Ovary (tissue), 10 donors: ENCODE measurements at regions of chr1 and their contacts with region 1.

Region 1: DNA sequence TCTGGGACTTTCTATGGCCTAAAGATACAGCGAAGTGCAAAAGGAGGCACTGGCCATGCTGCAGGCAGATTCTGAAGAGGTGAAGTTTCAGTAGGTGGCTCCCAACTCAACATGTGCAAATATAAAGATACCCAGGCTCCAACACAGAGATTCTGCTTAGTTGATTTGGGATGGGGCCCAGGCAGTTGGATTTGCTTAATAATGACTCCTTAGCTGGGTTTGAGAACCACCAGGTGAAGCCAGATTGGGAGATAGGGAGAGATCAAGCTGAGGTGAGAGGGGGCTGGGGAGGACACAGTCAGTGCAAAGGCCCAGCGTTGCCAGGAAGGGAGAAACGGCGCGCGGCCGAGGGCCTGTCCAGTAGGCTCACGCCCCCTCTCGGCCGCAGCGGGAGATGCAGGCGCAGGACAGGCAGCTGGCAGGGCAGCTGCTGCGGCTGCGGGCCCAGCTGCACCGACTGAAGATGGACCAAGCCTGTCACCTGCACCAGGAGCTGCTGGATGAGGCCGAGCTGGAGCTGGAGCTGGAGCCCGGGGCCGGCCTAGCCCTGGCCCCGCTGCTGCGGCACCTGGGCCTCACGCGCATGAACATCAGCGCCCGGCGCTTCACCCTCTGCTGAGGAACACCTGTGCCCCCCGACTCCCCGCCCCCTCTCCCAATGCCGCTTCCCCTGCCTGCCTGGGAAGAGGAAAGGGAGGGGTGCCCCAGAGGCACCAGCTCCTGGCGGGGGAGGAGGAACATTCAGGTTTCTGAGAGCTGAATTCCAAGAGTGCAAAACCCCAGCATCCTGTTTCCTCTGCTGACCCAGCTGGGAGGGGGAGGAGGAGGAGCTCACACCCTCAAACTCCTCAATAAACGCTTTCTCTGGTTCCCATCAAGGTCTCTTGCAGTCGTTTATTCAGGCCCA is 1.2 kb downstream of the FAM167B start:
- DNase-seq: peak; percentile 82 to 88 (median 84)
- H3K4me3 ChIP-seq: no peak overlapping the region
- H3K27ac ChIP-seq: no peak overlapping the region
- H3K4me1 ChIP-seq: peaks cover 12% of the 10 kb centered on the region
- H3K27me3 ChIP-seq: no peaks in the 10 kb centered on the region
- CTCF ChIP-seq: peak; percentile 33 to 81 (median 76)
- EP300 ChIP-seq: no peak
- POLR2A ChIP-seq: no peak

Region 2: DNA sequence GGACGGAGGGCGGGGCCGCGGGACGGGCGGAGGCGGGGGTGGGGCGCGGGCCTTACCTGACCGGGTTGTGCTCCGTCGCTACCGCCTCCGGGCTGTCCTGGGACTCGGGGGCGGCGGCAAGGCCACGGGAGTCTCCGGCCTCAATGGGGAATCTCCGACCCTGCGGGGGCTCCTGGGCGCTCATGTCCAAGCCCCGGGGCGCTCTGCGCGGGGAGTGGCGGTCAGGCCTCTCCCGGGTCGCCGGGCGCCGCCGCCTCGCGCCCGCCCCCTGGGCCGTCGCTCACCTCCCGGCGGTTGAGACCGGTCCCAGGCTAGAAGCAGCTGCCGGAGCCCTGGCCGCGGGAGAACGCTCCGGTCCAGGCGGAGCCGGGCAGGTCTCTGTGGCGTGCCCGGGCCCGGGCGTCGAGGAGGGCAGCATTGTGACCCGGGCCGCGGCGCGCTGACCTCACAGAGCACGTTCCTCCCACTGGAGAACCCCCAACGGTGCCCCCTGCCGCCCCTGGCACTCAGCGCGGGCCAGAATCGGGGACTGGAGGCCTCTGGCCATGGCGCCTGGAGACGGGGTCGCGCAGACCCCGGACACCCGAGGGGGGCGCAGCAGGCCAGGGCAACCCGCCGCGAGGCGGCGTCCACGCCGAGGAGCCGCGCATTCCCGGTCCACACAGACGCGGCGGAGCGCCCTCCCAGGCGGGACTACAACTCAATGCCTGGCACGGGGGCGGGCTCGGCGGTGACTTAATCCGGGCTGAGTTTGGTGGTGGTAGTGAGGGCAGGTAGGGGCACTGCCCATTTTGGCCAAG is 113.6 kb after region 1 on chr1:
- intact Hi-C with region 1: loop called in 1 of 4 experiments (anchors 10 kb)
- DNase-seq: peak; percentile 77 to 88 (median 83)
- H3K4me3 ChIP-seq: peak overlapping the region; percentile 24
- H3K27ac ChIP-seq: peak overlapping the region; percentile 68 to 87
- H3K4me1 ChIP-seq: peaks cover 8% of the 10 kb centered on the region
- H3K27me3 ChIP-seq: no peaks in the 10 kb centered on the region
- CTCF ChIP-seq: peak; percentile 46 to 84 (median 78)
- EP300 ChIP-seq: no peak
- POLR2A ChIP-seq: no peak

Region 3: GRCh38 chr1:32431736-32432400 is 183.6 kb after region 1 on chr1:
- intact Hi-C with region 1: no loop called
- DNase-seq: no peak
- H3K4me3 ChIP-seq: no peak overlapping the region
- H3K27ac ChIP-seq: no peak overlapping the region
- H3K4me1 ChIP-seq: no peaks in the 10 kb centered on the region
- H3K27me3 ChIP-seq: no peaks in the 10 kb centered on the region
- CTCF ChIP-seq: no peak
- EP300 ChIP-seq: no peak
- POLR2A ChIP-seq: no peak